ENCODE measurements at regions of chr1 and their contacts with region 1.

Region 1: GRCh38 chr1:245045087-245045881 is 109.5 kb upstream of the KIF26B start:
- DNase-seq: no peak
- H3K4me3 ChIP-seq: no peak overlapping the region
- H3K27ac ChIP-seq: no peak overlapping the region
- H3K4me1 ChIP-seq: peaks cover 0 to 11% (median 7%) of the 10 kb centered on the region in 4 experiments; a peak in 6 of 7 replicates
- H3K27me3 ChIP-seq: no peaks in the 10 kb centered on the region
- CTCF ChIP-seq: no peak
- EP300 ChIP-seq: no peak
- POLR2A ChIP-seq: no peak
- RAD21 ChIP-seq: no peak

Region 2: GRCh38 chr1:244849189-244849866 is 196.0 kb before region 1 on chr1:
- CTCF ChIA-PET with region 1: interaction called, 11 read pairs
- POLR2A ChIA-PET with region 1: no interaction called
- DNase-seq: no peak
- H3K4me3 ChIP-seq: no peak overlapping the region
- H3K27ac ChIP-seq: no peak overlapping the region
- H3K4me1 ChIP-seq: no peaks in the 10 kb centered on the region
- H3K27me3 ChIP-seq: no peaks in the 10 kb centered on the region
- CTCF ChIP-seq: no peak
- EP300 ChIP-seq: no peak
- POLR2A ChIP-seq: peak in 1 of 2 experiments; percentile 12; a peak in 1 of 3 replicates
- RAD21 ChIP-seq: no peak

Region 3: GRCh38 chr1:244864253-244865027 is 180.8 kb before region 1 on chr1 and contains the start of gene HNRNPU:
- CTCF ChIA-PET with region 1: interaction called, 12 read pairs
- POLR2A ChIA-PET with region 1: interaction called, 32 read pairs
- DNase-seq: peak; percentile 91 to 96
- H3K4me3 ChIP-seq: peak within 1 kb of the TSS; percentile 90 to 100 (median 98)
- H3K27ac ChIP-seq: peak within 1 kb of the TSS; percentile 93
- H3K4me1 ChIP-seq: peaks cover 0 to 3% (median 3%) of the 10 kb centered on the region in 4 experiments; a peak in 4 of 7 replicates
- H3K27me3 ChIP-seq: no peaks in the 10 kb centered on the region
- CTCF ChIP-seq: peak in 1 of 3 experiments; percentile 8; a peak in 1 of 4 replicates
- EP300 ChIP-seq: peak in 1 of 2 experiments; percentile 4; a peak in 1 of 3 replicates
- POLR2A ChIP-seq: peak; percentile 83 to 86
- RAD21 ChIP-seq: 0 out of 4 replicates have a peak, but pooled peaks of 1 of the 2 experiments have one; percentile 4
- total RNA-seq, gene HNRNPU: 606 and 614 TPM in 2 replicates

Region 4: GRCh38 chr1:245008761-245009160 is 36.5 kb before region 1 on chr1:
- CTCF ChIA-PET with region 1: interaction called, 13 read pairs
- POLR2A ChIA-PET with region 1: no interaction called
- DNase-seq: no peak
- H3K4me3 ChIP-seq: no peak overlapping the region
- H3K27ac ChIP-seq: no peak overlapping the region
- H3K4me1 ChIP-seq: no peaks in the 10 kb centered on the region
- H3K27me3 ChIP-seq: no peaks in the 10 kb centered on the region
- CTCF ChIP-seq: no peak
- EP300 ChIP-seq: no peak
- POLR2A ChIP-seq: no peak
- RAD21 ChIP-seq: no peak

Region 5: GRCh38 chr1:245031041-245031440 is 14.2 kb before region 1 on chr1:
- CTCF ChIA-PET with region 1: interaction called, 35 read pairs
- POLR2A ChIA-PET with region 1: interaction called, 3 read pairs
- DNase-seq: no peak
- H3K4me3 ChIP-seq: no peak overlapping the region
- H3K27ac ChIP-seq: no peak overlapping the region
- H3K4me1 ChIP-seq: no peaks in the 10 kb centered on the region
- H3K27me3 ChIP-seq: no peaks in the 10 kb centered on the region
- CTCF ChIP-seq: no peak
- EP300 ChIP-seq: no peak
- POLR2A ChIP-seq: no peak
- RAD21 ChIP-seq: no peak

Region 6: DNA sequence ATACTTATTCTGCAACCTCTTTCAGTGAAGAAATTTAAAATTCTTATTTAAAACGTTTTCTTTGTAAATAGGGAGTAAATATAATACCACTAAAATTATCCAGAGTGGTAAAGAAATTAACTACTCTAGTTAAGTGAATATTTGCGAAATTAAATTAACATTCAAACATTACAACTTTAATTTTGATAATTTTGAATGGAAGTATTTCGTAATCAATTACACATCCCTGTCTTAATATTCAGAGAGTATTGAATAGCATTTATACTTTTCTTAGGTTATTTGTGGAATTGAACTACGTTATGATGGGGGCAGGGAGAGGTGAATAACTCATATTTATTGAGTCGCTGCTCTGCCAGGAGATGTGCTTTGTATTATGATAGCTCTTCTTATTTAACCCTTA is 13.2 kb after region 1 on chr1:
- CTCF ChIA-PET with region 1: interaction called, 10 read pairs
- POLR2A ChIA-PET with region 1: interaction called, 3 read pairs
- DNase-seq: no peak
- H3K4me3 ChIP-seq: no peak overlapping the region
- H3K27ac ChIP-seq: no peak overlapping the region
- H3K4me1 ChIP-seq: peaks cover 5 to 10% (median 8%) of the 10 kb centered on the region in 4 experiments; a peak in 6 of 7 replicates
- H3K27me3 ChIP-seq: no peaks in the 10 kb centered on the region
- CTCF ChIP-seq: no peak
- EP300 ChIP-seq: no peak
- POLR2A ChIP-seq: no peak
- RAD21 ChIP-seq: no peak

Region 7: GRCh38 chr1:245105815-245106410 is 60.6 kb after region 1 on chr1:
- CTCF ChIA-PET with region 1: no interaction called
- POLR2A ChIA-PET with region 1: no interaction called
- DNase-seq: no peak
- H3K4me3 ChIP-seq: no peak overlapping the region
- H3K27ac ChIP-seq: no peak overlapping the region
- H3K4me1 ChIP-seq: peaks cover 0 to 3% (median under 1%) of the 10 kb centered on the region in 4 experiments; a peak in 1 of 7 replicates
- H3K27me3 ChIP-seq: no peaks in the 10 kb centered on the region
- CTCF ChIP-seq: no peak
- EP300 ChIP-seq: no peak
- POLR2A ChIP-seq: no peak
- RAD21 ChIP-seq: no peak

Region 8: DNA sequence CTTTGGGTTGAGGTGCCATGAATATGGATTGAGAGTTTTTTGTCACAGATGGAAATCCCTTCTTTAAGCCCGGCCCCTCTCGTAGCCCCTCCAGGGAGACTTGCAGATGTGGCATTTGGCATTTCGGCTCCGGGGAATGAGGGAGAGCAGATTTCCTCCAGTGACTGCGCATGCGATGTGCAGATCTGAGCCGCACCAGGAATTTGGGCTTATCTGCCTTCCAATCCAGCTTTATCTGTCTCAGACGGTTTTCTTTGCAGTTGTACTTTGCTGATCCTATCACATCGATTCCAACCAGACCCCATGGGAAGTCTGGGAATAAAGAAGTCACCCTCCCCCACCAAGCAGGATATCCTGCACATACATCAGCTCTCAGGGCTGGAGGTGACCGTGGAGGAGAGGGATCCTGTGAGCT is 121.2 kb after region 1 on chr1:
- CTCF ChIA-PET with region 1: no interaction called
- POLR2A ChIA-PET with region 1: no interaction called
- DNase-seq: no peak
- H3K4me3 ChIP-seq: peak overlapping the region in 1 of 4 experiments; percentile 16; a peak in 1 of 8 replicates
- H3K27ac ChIP-seq: no peak overlapping the region
- H3K4me1 ChIP-seq: peaks cover 0 to 2% (median under 1%) of the 10 kb centered on the region in 4 experiments; a peak in 2 of 7 replicates
- H3K27me3 ChIP-seq: no peaks in the 10 kb centered on the region
- CTCF ChIP-seq: no peak
- EP300 ChIP-seq: no peak
- POLR2A ChIP-seq: no peak
- RAD21 ChIP-seq: no peak

Measured in H1 (cell line).